ENCODE measurements at regions of chr19 and their contacts with region 1.

Region 1: DNA sequence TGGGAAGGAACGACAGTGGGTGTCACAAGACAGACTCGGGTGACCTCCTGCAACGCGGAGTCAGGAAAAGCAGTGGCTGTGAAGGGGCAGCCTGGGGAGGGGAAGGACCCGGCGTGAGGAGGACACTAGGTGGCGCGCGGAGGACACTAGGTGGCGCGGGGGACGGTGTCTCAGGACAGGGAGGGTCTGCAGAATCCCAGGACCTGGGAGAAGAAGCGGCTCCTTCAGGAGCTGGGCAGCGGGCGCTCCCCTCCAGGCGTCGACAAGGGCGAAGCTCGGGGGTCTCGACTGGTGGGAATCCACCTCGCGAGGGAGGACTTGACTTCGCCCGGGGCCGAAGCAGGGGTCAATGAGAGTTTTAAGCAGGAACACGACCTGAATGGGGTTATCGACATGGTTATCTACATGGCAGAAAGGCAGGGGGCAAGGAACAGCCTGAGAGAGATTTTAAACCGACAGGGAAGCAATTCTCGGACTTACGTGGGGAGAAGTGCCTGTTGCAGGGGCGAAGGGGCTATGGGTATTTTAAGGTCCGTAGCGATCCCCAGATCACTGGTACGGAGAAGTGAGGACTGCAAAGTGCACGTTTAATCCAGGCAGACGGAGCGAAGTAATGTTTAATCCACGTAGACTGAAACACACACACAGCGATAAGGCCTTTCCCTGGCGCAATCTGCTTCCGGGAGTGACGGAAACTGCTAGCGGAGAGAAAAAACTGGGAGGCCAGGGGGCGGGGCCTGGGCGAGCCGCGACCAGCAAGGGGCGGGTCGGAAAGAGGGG is at the start of gene ZNF616:
- DNase-seq: peak; percentile 47 to 98 (median 82)
- ATAC-seq: peak; percentile 47
- H3K4me3 ChIP-seq: peak within 1 kb of the TSS; percentile 84 to 97
- H3K4me3 Mint-ChIP-seq: peak within 1 kb of the TSS; percentile 98
- H3K27ac ChIP-seq: peak within 1 kb of the TSS; percentile 79 to 90
- H3K27ac Mint-ChIP-seq: peak within 1 kb of the TSS; percentile 97
- H3K4me1 ChIP-seq: peaks cover 18% of the 10 kb centered on the region
- H3K4me1 Mint-ChIP-seq: peaks cover 42% of the 10 kb centered on the region
- H3K27me3 ChIP-seq: no peaks in the 10 kb centered on the region
- H3K27me3 Mint-ChIP-seq: no peaks in the 10 kb centered on the region
- CTCF ChIP-seq: peak; percentile 73
- total RNA-seq, gene ZNF616: 1.8 to 3.0 TPM

Region 2: DNA sequence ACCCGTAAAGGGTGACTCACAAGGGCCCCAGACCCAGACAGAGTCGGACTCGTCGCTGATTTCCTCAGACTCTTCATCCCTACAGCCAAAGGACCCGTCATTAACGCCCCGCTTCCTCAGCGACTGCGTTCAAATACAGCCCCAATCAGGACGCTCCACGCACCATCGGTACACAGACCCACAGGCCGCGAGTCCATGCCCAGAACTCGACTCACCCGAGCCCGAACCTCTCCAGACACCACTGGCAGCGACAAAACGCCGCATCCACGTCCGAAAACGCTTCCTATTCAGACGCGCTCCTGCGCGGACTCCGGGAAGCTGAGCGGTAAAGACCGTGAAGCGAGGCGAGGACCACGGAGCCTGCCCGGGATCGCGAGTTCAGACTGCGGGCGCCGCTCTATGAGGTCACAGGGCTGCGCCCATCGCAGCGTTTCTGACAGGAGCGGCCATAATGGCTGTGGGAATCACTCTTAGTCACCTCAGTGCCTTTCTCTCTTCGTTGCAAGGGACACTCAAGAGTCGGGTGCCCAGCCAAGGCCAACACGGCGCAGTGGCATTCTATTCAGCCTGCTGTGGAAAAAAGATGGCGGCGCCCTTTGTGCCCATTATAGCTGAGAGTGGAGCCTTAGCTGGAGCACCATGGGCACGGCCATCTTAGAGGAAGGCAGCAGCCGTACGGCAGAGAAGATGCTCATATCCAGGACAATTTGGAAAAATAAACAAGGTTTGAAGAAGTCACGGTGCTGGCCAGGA is 111.2 kb before region 1 on chr19 and contains the start of gene ZNF614:
- CTCF ChIA-PET with region 1: no interaction called
- POLR2A ChIA-PET with region 1: no interaction called
- intact Hi-C with region 1: loop called in 1 of 2 experiments (anchors 5 kb)
- DNase-seq: peak; percentile 74 to 92 (median 85)
- ATAC-seq: peak; percentile 86
- H3K4me3 ChIP-seq: peak within 1 kb of the TSS; percentile 92 to 93
- H3K4me3 Mint-ChIP-seq: peak within 1 kb of the TSS; percentile 98
- H3K27ac ChIP-seq: peak within 1 kb of the TSS; percentile 93 to 94
- H3K27ac Mint-ChIP-seq: peak within 1 kb of the TSS; percentile 99
- H3K4me1 ChIP-seq: peaks cover 10% of the 10 kb centered on the region
- H3K4me1 Mint-ChIP-seq: peaks cover 30% of the 10 kb centered on the region
- H3K27me3 ChIP-seq: no peaks in the 10 kb centered on the region
- H3K27me3 Mint-ChIP-seq: no peaks in the 10 kb centered on the region
- CTCF ChIP-seq: no peak
- total RNA-seq, gene ZNF614: 10.6 to 11.4 TPM

Region 3: DNA sequence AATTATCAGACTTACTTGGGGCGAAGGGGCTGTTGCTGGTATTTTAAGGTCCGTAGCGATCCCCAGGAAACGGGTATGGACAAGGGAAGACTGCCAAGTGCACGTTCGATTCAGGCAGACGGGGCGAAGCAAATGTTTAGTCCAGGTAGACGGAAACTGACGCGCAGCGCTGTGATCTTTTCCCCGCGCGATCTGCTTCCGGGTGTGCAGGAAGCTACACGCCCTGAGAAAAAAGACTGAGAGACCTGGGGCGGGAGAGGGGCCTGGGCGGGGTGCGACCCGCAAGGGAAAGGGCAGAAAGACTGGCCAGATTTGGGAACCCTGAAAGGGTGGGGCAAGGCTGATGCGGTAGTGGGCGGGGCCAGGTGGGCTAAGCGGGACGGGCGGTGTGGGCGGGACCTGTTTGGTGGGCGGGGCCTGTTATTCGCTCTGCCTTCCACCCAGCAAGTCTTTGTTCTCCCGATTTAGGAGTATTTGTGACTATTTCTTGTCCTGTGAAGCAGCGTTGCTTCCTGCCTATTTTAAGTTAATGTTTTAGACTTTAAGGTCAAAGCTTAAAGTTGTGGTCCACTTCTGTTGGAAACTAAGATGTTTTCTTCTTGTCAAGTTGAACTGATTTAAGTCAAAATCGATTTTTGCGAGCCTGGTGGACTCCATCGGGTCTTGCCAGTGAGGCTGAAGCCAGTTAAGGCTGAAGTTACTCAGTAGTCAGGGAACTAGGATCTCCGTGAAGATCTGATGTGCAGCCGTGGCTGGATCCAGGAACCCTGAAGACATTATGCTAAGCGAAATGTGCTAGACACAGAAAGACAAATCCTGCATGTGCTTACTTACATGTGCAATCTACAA is 32.1 kb after region 1 on chr19 and contains the start of gene ZNF836:
- CTCF ChIA-PET with region 1: interaction called, 11 read pairs
- POLR2A ChIA-PET with region 1: no interaction called
- intact Hi-C with region 1: loop called (anchors 1 kb)
- DNase-seq: peak; percentile 79 to 95 (median 92)
- ATAC-seq: peak; percentile 92
- H3K4me3 ChIP-seq: peak within 1 kb of the TSS; percentile 83 to 96
- H3K4me3 Mint-ChIP-seq: peak within 1 kb of the TSS; percentile 94
- H3K27ac ChIP-seq: peak within 1 kb of the TSS; percentile 72 to 96
- H3K27ac Mint-ChIP-seq: peak within 1 kb of the TSS; percentile 95
- H3K4me1 ChIP-seq: peaks cover 24% of the 10 kb centered on the region
- H3K4me1 Mint-ChIP-seq: peaks cover 41% of the 10 kb centered on the region
- H3K27me3 ChIP-seq: no peaks in the 10 kb centered on the region
- H3K27me3 Mint-ChIP-seq: no peaks in the 10 kb centered on the region
- CTCF ChIP-seq: no peak
- total RNA-seq, gene ZNF836: 17.6 to 22.1 TPM

Region 4: GRCh38 chr19:52269338-52270261 is 130.2 kb after region 1 on chr19 and contains the start of gene ZNF766:
- CTCF ChIA-PET with region 1: no interaction called
- POLR2A ChIA-PET with region 1: no interaction called
- intact Hi-C with region 1: loop called in 1 of 2 experiments (anchors 1 kb)
- DNase-seq: peak; percentile 95 to 98 (median 97)
- ATAC-seq: peak; percentile 98
- H3K4me3 ChIP-seq: peak within 1 kb of the TSS; percentile 89 to 95
- H3K4me3 Mint-ChIP-seq: peak within 1 kb of the TSS; percentile 98
- H3K27ac ChIP-seq: peak within 1 kb of the TSS; percentile 96
- H3K27ac Mint-ChIP-seq: peak within 1 kb of the TSS; percentile 98
- H3K4me1 ChIP-seq: peaks cover 13% of the 10 kb centered on the region
- H3K4me1 Mint-ChIP-seq: peaks cover 41% of the 10 kb centered on the region
- H3K27me3 ChIP-seq: no peaks in the 10 kb centered on the region
- H3K27me3 Mint-ChIP-seq: no peaks in the 10 kb centered on the region
- CTCF ChIP-seq: no peak
- total RNA-seq, gene ZNF766: 50.8 to 52.6 TPM

Region 5: GRCh38 chr19:52570000-52570861 is 430.8 kb after region 1 on chr19 and contains the start of gene ZNF701:
- CTCF ChIA-PET with region 1: no interaction called
- POLR2A ChIA-PET with region 1: no interaction called
- intact Hi-C with region 1: loop called in 1 of 2 experiments (anchors 1 kb)
- DNase-seq: peak; percentile 93 to 97 (median 95)
- ATAC-seq: peak; percentile 98
- H3K4me3 ChIP-seq: peak within 1 kb of the TSS; percentile 81 to 96
- H3K4me3 Mint-ChIP-seq: peak within 1 kb of the TSS; percentile 90
- H3K27ac ChIP-seq: peak within 1 kb of the TSS; percentile 77 to 91
- H3K27ac Mint-ChIP-seq: peak within 1 kb of the TSS; percentile 93
- H3K4me1 ChIP-seq: peaks cover 12% of the 10 kb centered on the region
- H3K4me1 Mint-ChIP-seq: peaks cover 42% of the 10 kb centered on the region
- H3K27me3 ChIP-seq: no peaks in the 10 kb centered on the region
- H3K27me3 Mint-ChIP-seq: no peaks in the 10 kb centered on the region
- CTCF ChIP-seq: peak; percentile 30
- total RNA-seq, gene ZNF701: 11.2 to 11.9 TPM

Region 6: DNA sequence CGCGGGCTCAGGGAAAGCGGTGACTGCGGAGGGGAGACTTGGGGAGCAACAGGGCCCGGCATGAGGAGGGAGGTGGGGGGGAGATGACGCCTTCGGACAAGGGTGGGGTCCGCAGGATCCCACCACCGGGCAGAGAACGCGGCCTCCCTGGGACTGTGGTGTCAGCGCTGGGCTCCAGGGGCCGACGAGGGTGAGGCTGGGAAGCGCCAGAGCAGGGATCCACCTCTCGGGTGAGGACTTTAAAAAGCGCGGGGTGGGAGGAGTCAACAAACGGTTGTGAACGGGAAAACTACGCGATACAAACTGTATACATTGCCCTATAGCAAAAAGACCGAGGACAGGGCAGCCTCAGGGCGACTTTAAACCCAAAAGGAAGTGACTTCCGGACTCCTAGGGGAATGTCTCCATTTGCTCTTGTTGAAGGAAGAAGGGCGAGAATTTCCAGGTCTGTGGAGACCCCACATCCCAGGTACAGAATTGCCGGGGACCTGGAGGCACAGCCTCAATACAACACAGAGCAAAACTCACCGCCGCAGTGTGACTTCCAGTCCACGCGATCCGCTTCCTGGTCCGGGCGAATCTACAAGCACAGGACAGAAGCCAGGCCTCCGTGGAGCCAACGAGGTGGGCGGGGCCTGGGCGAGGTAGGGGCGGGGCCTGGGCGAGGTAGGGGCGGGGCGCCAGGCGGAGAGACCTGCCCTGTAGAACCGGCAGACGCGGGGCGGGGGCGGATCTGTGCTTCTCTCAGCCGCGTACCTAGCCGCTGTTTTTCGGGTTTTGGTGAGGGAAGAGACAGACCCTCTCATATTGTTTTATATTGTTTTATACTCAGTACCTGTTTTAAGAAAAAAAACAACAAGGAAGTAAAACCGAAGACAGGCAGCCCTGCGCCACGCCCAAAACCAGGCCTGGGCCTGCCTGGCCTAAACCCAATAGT is 783.7 kb after region 1 on chr19 and contains the start of gene ZNF888:
- CTCF ChIA-PET with region 1: no interaction called
- POLR2A ChIA-PET with region 1: no interaction called
- intact Hi-C with region 1: loop called in 1 of 2 experiments (anchors 5 kb)
- DNase-seq: peak; percentile 74 to 90 (median 82)
- ATAC-seq: peak; percentile 100
- H3K4me3 ChIP-seq: peak within 1 kb of the TSS; percentile 93 to 97
- H3K4me3 Mint-ChIP-seq: peak within 1 kb of the TSS; percentile 94
- H3K27ac ChIP-seq: peak within 1 kb of the TSS; percentile 62 to 75
- H3K27ac Mint-ChIP-seq: peak within 1 kb of the TSS; percentile 90
- H3K4me1 ChIP-seq: peaks cover 14% of the 10 kb centered on the region
- H3K4me1 Mint-ChIP-seq: peaks cover 33% of the 10 kb centered on the region
- H3K27me3 ChIP-seq: no peaks in the 10 kb centered on the region
- H3K27me3 Mint-ChIP-seq: no peaks in the 10 kb centered on the region
- CTCF ChIP-seq: no peak
- total RNA-seq, gene ZNF888: 4.5 to 4.9 TPM